Naive thymus-derived CD4-positive, alpha-beta T cell (primary cell): ENCODE measurements at regions of chr4 and their contacts with region 1.

Region 1: GRCh38 chr4:184263910-184264732 is 46.4 kb upstream of the ENPP6 start:
- DNase-seq: peak; percentile 80 to 90 (median 87)
- ATAC-seq: peak; percentile 86
- H3K4me3 ChIP-seq: no peak overlapping the region
- H3K4me3 Mint-ChIP-seq: peak overlapping the region in 1 of 10 donors; percentile 17
- H3K27ac ChIP-seq: no peak overlapping the region
- H3K27ac Mint-ChIP-seq: peak overlapping the region in 6 of 9 donors; percentile 5 to 72 (median 63)
- H3K4me1 ChIP-seq: peaks cover 6 to 14% of the 10 kb centered on the region in 2 donors
- H3K4me1 Mint-ChIP-seq: peaks cover 5 to 54% (median 28%) of the 10 kb centered on the region in 7 donors
- H3K27me3 ChIP-seq: no peaks in the 10 kb centered on the region
- H3K27me3 Mint-ChIP-seq: peaks cover 0 to 2% (median 0%) of the 10 kb centered on the region in 5 donors

Region 2: DNA sequence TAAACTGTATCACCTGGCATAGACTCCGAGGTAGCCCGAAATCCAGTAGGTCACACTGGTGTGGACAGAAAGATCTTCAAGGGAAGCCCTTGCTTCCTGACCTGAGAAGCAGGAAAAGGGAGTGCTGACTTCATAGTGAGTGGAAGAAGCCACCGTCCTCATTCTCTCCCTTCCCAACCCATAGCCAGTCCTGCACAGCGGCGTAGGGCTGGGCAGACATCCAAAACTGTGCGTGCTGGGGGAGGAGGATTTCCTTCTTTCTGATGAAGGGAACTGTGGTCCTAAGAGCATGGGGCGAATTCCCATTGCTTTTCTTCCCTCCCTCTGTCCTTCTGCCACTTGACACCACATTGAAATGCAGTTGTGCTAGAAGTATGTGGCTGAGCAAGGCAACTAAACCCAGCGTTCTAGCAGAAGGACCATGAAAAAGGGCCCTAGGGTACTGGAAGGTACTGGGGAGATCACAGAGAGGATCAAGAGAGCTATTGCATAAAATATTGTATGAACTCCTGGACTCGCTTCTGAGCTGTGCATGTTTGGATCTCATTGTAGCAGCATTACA is 292.1 kb before region 1 on chr4:
- CTCF ChIA-PET with region 1: no interaction called
- POLR2A ChIA-PET with region 1: no interaction called
- intact Hi-C with region 1: no loop called
- DNase-seq: no peak
- ATAC-seq: no peak
- H3K4me3 ChIP-seq: no peak overlapping the region
- H3K4me3 Mint-ChIP-seq: no peak overlapping the region
- H3K27ac ChIP-seq: no peak overlapping the region
- H3K27ac Mint-ChIP-seq: peak overlapping the region in 1 of 9 donors; percentile 62
- H3K4me1 ChIP-seq: no peaks in the 10 kb centered on the region
- H3K4me1 Mint-ChIP-seq: peaks cover 0 to 1% (median 0%) of the 10 kb centered on the region in 7 donors
- H3K27me3 ChIP-seq: no peaks in the 10 kb centered on the region
- H3K27me3 Mint-ChIP-seq: peaks cover 15 to 67% (median 21%) of the 10 kb centered on the region in 5 donors

Region 3: GRCh38 chr4:184198190-184198589 is 65.9 kb before region 1 on chr4:
- CTCF ChIA-PET with region 1: no interaction called
- POLR2A ChIA-PET with region 1: no interaction called
- intact Hi-C with region 1: no loop called
- DNase-seq: no peak
- ATAC-seq: no peak
- H3K4me3 ChIP-seq: no peak overlapping the region
- H3K4me3 Mint-ChIP-seq: no peak overlapping the region
- H3K27ac ChIP-seq: no peak overlapping the region
- H3K27ac Mint-ChIP-seq: no peak overlapping the region
- H3K4me1 ChIP-seq: no peaks in the 10 kb centered on the region
- H3K4me1 Mint-ChIP-seq: no peaks in the 10 kb centered on the region
- H3K27me3 ChIP-seq: no peaks in the 10 kb centered on the region
- H3K27me3 Mint-ChIP-seq: peaks cover 0 to 10% (median 4%) of the 10 kb centered on the region in 5 donors

Region 4: GRCh38 chr4:184237612-184238011 is 26.5 kb before region 1 on chr4:
- CTCF ChIA-PET with region 1: interaction called, 4 read pairs
- POLR2A ChIA-PET with region 1: no interaction called
- intact Hi-C with region 1: loop called in 1 of 2 experiments (anchors 2 kb)
- DNase-seq: peak in 1 of 9 donors; percentile 31
- ATAC-seq: peak; percentile 45
- H3K4me3 ChIP-seq: no peak overlapping the region
- H3K4me3 Mint-ChIP-seq: peak overlapping the region in 1 of 10 donors; percentile 80
- H3K27ac ChIP-seq: no peak overlapping the region
- H3K27ac Mint-ChIP-seq: peak overlapping the region in 4 of 9 donors; percentile 19 to 93 (median 27)
- H3K4me1 ChIP-seq: no peaks in the 10 kb centered on the region
- H3K4me1 Mint-ChIP-seq: peaks cover 0 to 51% (median 8%) of the 10 kb centered on the region in 7 donors
- H3K27me3 ChIP-seq: no peaks in the 10 kb centered on the region
- H3K27me3 Mint-ChIP-seq: no peaks in the 10 kb centered on the region

Region 5: GRCh38 chr4:184343502-184344177 is 79.5 kb after region 1 on chr4:
- CTCF ChIA-PET with region 1: interaction called, 7 read pairs
- POLR2A ChIA-PET with region 1: interaction called, 3 read pairs
- intact Hi-C with region 1: loop called (anchors 2 to 5 kb)
- DNase-seq: peak in 7 of 9 donors; percentile 18 to 59 (median 46)
- ATAC-seq: peak; percentile 59
- H3K4me3 ChIP-seq: peak overlapping the region; percentile 69
- H3K4me3 Mint-ChIP-seq: peak overlapping the region; percentile 74 to 92 (median 87)
- H3K27ac ChIP-seq: peak overlapping the region; percentile 4
- H3K27ac Mint-ChIP-seq: peak overlapping the region; percentile 40 to 88 (median 53)
- H3K4me1 ChIP-seq: no peaks in the 10 kb centered on the region
- H3K4me1 Mint-ChIP-seq: peaks cover 0 to 32% (median 16%) of the 10 kb centered on the region in 7 donors
- H3K27me3 ChIP-seq: no peaks in the 10 kb centered on the region
- H3K27me3 Mint-ChIP-seq: no peaks in the 10 kb centered on the region

Region 6: GRCh38 chr4:184745831-184746795 is 482.0 kb after region 1 on chr4:
- CTCF ChIA-PET with region 1: interaction called, 5 read pairs
- POLR2A ChIA-PET with region 1: interaction called, 3 read pairs
- intact Hi-C with region 1: loop called in 1 of 2 experiments (anchors 1 kb)
- DNase-seq: peak; percentile 37 to 82 (median 76)
- ATAC-seq: peak; percentile 93
- H3K4me3 ChIP-seq: no peak overlapping the region
- H3K4me3 Mint-ChIP-seq: peak overlapping the region; percentile 18 to 73 (median 54)
- H3K27ac ChIP-seq: peak overlapping the region; percentile 30
- H3K27ac Mint-ChIP-seq: peak overlapping the region; percentile 58 to 90 (median 88)
- H3K4me1 ChIP-seq: peaks cover 0 to 14% of the 10 kb centered on the region in 2 donors
- H3K4me1 Mint-ChIP-seq: peaks cover 16 to 20% (median 18%) of the 10 kb centered on the region in 7 donors
- H3K27me3 ChIP-seq: no peaks in the 10 kb centered on the region
- H3K27me3 Mint-ChIP-seq: peaks cover 0 to 3% (median 0%) of the 10 kb centered on the region in 5 donors

Region 7: DNA sequence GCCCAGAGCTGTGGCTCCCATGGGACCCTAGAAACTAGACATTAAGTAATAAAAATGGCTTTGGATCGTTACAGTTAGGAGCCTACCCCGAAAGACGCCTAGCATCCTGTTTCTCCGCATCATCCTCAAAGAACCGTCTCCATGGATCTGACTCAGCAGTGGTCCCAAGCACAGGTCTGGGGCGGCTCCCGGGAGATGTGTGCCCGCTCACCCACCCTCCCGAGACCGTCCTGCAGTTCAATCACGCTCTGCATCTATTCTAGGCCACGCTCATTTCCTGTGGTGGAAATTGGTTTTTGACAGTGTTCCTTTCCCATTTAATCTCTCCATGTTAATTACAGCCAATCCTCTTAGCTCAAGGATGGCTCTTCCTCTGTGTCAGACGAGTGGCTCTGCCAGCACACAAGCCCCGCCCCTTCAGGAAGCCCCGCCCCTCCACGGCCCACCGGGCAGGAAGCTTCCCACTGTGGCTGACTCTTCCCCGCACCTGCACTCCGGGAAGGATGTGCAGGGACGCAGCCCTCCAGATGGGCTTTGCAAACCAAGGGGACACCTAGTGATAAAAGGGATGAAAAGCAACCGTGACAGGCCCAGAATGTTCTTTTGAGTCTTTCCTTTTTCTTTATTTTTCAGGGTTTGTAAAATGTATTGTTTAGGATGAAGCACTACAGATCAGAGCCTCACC is 719.7 kb after region 1 on chr4:
- CTCF ChIA-PET with region 1: no interaction called
- POLR2A ChIA-PET with region 1: no interaction called
- intact Hi-C with region 1: loop called in 1 of 2 experiments (anchors 1 kb)
- DNase-seq: peak in 6 of 9 donors; percentile 37 to 56 (median 48)
- ATAC-seq: peak; percentile 60
- H3K4me3 ChIP-seq: peak overlapping the region; percentile 50
- H3K4me3 Mint-ChIP-seq: no peak overlapping the region
- H3K27ac ChIP-seq: no peak overlapping the region
- H3K27ac Mint-ChIP-seq: no peak overlapping the region
- H3K4me1 ChIP-seq: peaks cover 15 to 17% of the 10 kb centered on the region in 2 donors
- H3K4me1 Mint-ChIP-seq: peaks cover 0 to 2% (median 0%) of the 10 kb centered on the region in 7 donors
- H3K27me3 ChIP-seq: no peaks in the 10 kb centered on the region
- H3K27me3 Mint-ChIP-seq: peaks cover 0 to 6% (median 0%) of the 10 kb centered on the region in 5 donors

Region 8: GRCh38 chr4:185134307-185134869 is 870.3 kb after region 1 on chr4:
- CTCF ChIA-PET with region 1: interaction called, 5 read pairs
- POLR2A ChIA-PET with region 1: no interaction called
- intact Hi-C with region 1: loop called in 1 of 2 experiments (anchors 1 kb)
- DNase-seq: peak in 6 of 9 donors; percentile 22 to 52 (median 40)
- ATAC-seq: peak; percentile 86
- H3K4me3 ChIP-seq: no peak overlapping the region
- H3K4me3 Mint-ChIP-seq: no peak overlapping the region
- H3K27ac ChIP-seq: no peak overlapping the region
- H3K27ac Mint-ChIP-seq: no peak overlapping the region
- H3K4me1 ChIP-seq: no peaks in the 10 kb centered on the region
- H3K4me1 Mint-ChIP-seq: no peaks in the 10 kb centered on the region
- H3K27me3 ChIP-seq: peaks cover 0 to 3% of the 10 kb centered on the region in 2 donors
- H3K27me3 Mint-ChIP-seq: peaks cover 29 to 68% (median 40%) of the 10 kb centered on the region in 5 donors